ENCODE measurements at regions of chr13 and their contacts with region 1.

Region 1: GRCh38 chr13:52617070-52618060 is 24.9 kb upstream of the HNRNPA1L2 start:
- DNase-seq: peak; percentile 80 to 82
- ATAC-seq: peak; percentile 99
- H3K4me3 ChIP-seq: peak overlapping the region; percentile 82
- H3K27ac ChIP-seq: peak overlapping the region; percentile 81 to 85
- H3K4me1 ChIP-seq: no peaks in the 10 kb centered on the region
- CTCF ChIP-seq: no peak
- EP300 ChIP-seq: no peak
- POLR2A ChIP-seq: peak; percentile 59; the same call in 1 of the 2 replicates
- RAD21 ChIP-seq: no peak

Region 2: GRCh38 chr13:52428295-52428694 is 189.1 kb before region 1 on chr13:
- CTCF ChIA-PET with region 1: no interaction called
- POLR2A ChIA-PET with region 1: no interaction called
- DNase-seq: peak in 1 of 2 experiments; percentile 49
- ATAC-seq: peak in 1 of 2 experiments; percentile 69; a peak in 3 of 6 replicates
- H3K4me3 ChIP-seq: no peak overlapping the region
- H3K27ac ChIP-seq: peak overlapping the region; percentile 11 to 63; a peak in 4 of 6 replicates
- H3K4me1 ChIP-seq: peaks cover 18% of the 10 kb centered on the region
- CTCF ChIP-seq: no peak
- EP300 ChIP-seq: no peak
- POLR2A ChIP-seq: no peak
- RAD21 ChIP-seq: no peak

Region 3: DNA sequence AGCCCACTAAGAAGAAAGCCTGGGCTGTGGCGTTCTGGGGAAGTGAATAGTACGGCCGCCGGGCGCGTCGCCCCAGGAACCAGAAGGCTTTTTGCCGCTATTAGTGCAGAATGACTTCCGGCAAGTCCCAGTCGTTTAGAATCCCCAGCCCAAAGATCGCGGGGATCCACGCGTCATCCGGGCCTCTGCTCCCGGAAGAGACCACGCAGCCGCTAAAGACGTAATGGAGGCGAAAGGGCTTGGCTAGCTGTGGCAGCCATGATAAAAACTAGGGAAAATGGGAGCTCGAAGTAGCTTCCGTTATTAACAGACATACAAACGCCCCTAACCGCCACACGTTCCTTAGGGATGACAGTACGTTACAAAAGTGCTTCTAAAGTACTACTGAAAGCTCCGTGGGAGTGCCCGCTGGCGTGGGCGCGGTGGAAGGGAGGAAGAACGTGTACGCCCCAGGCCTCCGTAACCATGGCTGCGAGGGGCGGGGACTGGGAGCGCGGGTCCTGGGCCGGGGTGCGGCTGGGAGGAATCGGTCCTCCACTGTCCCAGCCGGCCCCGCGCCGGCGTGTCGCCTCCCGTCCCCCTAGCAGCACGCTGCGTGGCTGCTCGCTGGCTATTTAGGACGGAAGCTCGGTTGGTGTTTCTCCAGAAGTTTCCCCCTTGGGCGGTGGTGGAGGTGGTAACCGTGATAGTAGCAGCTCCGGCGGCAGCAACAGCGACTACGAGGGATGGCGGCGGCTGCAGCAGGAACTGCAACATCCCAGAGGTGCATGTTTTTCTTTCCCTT is 35.0 kb after region 1 on chr13 and contains the start of gene SUGT1:
- CTCF ChIA-PET with region 1: interaction called, 3 read pairs
- POLR2A ChIA-PET with region 1: interaction called, 56 read pairs
- DNase-seq: peak; percentile 60 to 96
- ATAC-seq: peak; percentile 97 to 98
- H3K4me3 ChIP-seq: peak within 1 kb of the TSS; percentile 58
- H3K27ac ChIP-seq: peak within 1 kb of the TSS; percentile 87 to 94
- H3K4me1 ChIP-seq: peaks cover 7% of the 10 kb centered on the region; the same call in 1 of the 3 replicates
- CTCF ChIP-seq: peak; percentile 40
- EP300 ChIP-seq: no peak
- POLR2A ChIP-seq: peak; percentile 75
- RAD21 ChIP-seq: no peak
- polyA plus RNA-seq, gene SUGT1: 37.7 and 56.4 TPM in 2 replicates